Naive thymus-derived CD4-positive, alpha-beta T cell (primary cell): ENCODE measurements at regions of chr7 and their contacts with region 1.

Region 1: GRCh38 chr7:99616359-99617191 is at the start of gene ZSCAN25:
- DNase-seq: peak; percentile 65 to 88 (median 85)
- ATAC-seq: peak; percentile 99
- H3K4me3 ChIP-seq: peak within 1 kb of the TSS; percentile 83
- H3K4me3 Mint-ChIP-seq: peak within 1 kb of the TSS; percentile 94 to 99 (median 98)
- H3K27ac ChIP-seq: peak within 1 kb of the TSS; percentile 90
- H3K27ac Mint-ChIP-seq: peak within 1 kb of the TSS; percentile 88 to 99 (median 97)
- H3K4me1 ChIP-seq: peaks cover 12 to 14% of the 10 kb centered on the region in 2 donors
- H3K4me1 Mint-ChIP-seq: peaks cover 30 to 55% (median 48%) of the 10 kb centered on the region in 7 donors
- H3K27me3 ChIP-seq: no peaks in the 10 kb centered on the region
- H3K27me3 Mint-ChIP-seq: peaks cover 0 to 4% (median 0%) of the 10 kb centered on the region in 5 donors
- total RNA-seq, gene ZSCAN25: 33.9 to 51.6 (median 43.8) TPM

Region 2: DNA sequence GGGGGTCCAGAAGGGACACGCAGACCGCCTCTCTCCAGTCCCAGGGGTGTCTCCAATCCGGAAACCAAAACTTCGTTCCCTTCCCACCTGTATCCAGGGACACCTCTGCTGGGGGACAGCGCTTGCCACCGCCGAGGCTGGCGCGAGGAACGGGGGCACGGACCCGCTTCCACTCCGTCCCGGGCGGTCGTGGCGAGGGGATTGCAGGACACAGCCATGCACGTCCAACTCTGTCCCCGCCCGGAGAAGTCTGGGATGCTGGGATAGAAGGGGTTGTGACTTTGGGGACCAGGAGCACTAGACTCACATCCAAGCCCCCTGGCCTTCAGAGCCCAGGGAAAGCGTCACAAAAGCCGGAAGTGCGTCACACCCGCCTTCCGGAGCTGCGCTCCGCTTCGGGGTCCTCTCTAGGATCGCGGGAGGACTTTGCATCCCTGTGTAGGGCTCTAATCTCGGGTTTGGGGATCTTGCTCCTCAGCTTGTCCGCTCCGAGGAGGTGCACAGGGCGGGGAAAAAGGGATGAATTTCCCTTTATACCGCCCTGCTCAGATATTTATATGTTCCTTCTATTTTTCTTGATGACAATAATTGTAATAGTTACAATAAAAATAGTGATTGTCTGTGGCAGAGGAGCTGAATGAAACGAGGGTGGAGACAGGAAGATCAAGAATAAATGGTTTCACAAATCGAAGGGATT is 64.7 kb before region 1 on chr7 and contains the start of gene FAM200A:
- CTCF ChIA-PET with region 1: no interaction called
- POLR2A ChIA-PET with region 1: interaction called, 38 read pairs
- intact Hi-C with region 1: loop called in 1 of 2 experiments (anchors 1 kb)
- DNase-seq: peak; percentile 62 to 88 (median 83)
- ATAC-seq: peak; percentile 99
- H3K4me3 ChIP-seq: peak within 1 kb of the TSS; percentile 93
- H3K4me3 Mint-ChIP-seq: peak within 1 kb of the TSS; percentile 85 to 95 (median 90)
- H3K27ac ChIP-seq: peak within 1 kb of the TSS; percentile 95
- H3K27ac Mint-ChIP-seq: peak within 1 kb of the TSS; percentile 73 to 98 (median 95)
- H3K4me1 ChIP-seq: peaks cover 17 to 23% of the 10 kb centered on the region in 2 donors
- H3K4me1 Mint-ChIP-seq: peaks cover 23 to 62% (median 48%) of the 10 kb centered on the region in 7 donors
- H3K27me3 ChIP-seq: no peaks in the 10 kb centered on the region
- H3K27me3 Mint-ChIP-seq: no peaks in the 10 kb centered on the region
- total RNA-seq, gene FAM200A: 1.9 to 13.6 (median 5.0) TPM

Region 3: DNA sequence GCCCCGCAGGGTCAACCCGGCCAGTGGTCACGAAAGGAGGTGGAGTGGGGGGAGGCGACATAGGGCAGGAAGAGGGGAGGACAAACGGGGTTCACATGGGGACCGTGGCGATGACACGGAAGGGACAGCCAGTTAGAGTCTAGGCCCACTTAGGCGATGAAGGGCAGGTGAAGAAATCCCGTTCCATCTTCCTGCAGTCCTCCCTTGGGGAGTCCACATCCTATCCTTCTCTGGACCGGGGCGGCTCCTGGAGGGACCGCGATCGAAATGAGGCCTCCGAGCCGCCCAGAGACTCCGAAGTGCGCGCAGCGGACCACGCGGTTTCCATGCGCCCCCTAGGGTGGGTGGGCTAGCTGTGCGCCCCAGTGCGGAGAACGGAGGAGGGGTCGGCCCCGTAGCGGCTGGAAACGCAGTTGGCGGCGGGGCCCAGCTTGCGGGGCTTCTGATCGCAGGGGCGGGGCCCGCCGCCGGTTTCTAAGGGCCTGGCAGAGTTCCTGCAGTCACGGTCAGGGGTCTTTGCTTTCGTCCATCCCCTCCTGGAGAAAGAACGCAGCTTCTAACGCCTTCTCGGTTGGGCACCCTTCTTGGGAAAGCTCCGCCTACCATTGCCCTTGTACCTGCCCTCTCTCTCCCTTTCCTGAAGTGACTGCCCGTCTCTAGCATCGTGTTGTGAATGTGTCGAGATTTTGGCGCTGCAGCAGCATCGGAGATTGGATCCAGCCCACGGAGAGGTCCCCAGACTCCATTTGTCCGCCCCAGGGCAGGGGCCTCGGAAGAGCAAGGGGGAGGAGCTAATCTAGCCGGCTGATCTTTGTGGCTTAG is 36.4 kb before region 1 on chr7:
- CTCF ChIA-PET with region 1: no interaction called
- POLR2A ChIA-PET with region 1: interaction called, 13 read pairs
- intact Hi-C with region 1: loop called in 1 of 2 experiments (anchors 2 kb)
- DNase-seq: peak; percentile 40 to 60 (median 53)
- ATAC-seq: peak; percentile 85
- H3K4me3 ChIP-seq: peak overlapping the region; percentile 77
- H3K4me3 Mint-ChIP-seq: peak overlapping the region; percentile 87 to 98 (median 94)
- H3K27ac ChIP-seq: peak overlapping the region; percentile 73
- H3K27ac Mint-ChIP-seq: peak overlapping the region; percentile 19 to 96 (median 86)
- H3K4me1 ChIP-seq: peaks cover 3 to 4% of the 10 kb centered on the region in 2 donors
- H3K4me1 Mint-ChIP-seq: peaks cover 0 to 24% (median 17%) of the 10 kb centered on the region in 7 donors
- H3K27me3 ChIP-seq: no peaks in the 10 kb centered on the region
- H3K27me3 Mint-ChIP-seq: peaks cover 0 to 3% (median 0%) of the 10 kb centered on the region in 5 donors

Region 4: GRCh38 chr7:99860281-99861127 is 243.9 kb after region 1 on chr7:
- CTCF ChIA-PET with region 1: no interaction called
- POLR2A ChIA-PET with region 1: no interaction called
- intact Hi-C with region 1: no loop called
- DNase-seq: no peak
- ATAC-seq: no peak
- H3K4me3 ChIP-seq: no peak overlapping the region
- H3K4me3 Mint-ChIP-seq: no peak overlapping the region
- H3K27ac ChIP-seq: no peak overlapping the region
- H3K27ac Mint-ChIP-seq: no peak overlapping the region
- H3K4me1 ChIP-seq: no peaks in the 10 kb centered on the region
- H3K4me1 Mint-ChIP-seq: no peaks in the 10 kb centered on the region
- H3K27me3 ChIP-seq: no peaks in the 10 kb centered on the region
- H3K27me3 Mint-ChIP-seq: peaks cover 5 to 10% (median 6%) of the 10 kb centered on the region in 5 donors

Region 5: DNA sequence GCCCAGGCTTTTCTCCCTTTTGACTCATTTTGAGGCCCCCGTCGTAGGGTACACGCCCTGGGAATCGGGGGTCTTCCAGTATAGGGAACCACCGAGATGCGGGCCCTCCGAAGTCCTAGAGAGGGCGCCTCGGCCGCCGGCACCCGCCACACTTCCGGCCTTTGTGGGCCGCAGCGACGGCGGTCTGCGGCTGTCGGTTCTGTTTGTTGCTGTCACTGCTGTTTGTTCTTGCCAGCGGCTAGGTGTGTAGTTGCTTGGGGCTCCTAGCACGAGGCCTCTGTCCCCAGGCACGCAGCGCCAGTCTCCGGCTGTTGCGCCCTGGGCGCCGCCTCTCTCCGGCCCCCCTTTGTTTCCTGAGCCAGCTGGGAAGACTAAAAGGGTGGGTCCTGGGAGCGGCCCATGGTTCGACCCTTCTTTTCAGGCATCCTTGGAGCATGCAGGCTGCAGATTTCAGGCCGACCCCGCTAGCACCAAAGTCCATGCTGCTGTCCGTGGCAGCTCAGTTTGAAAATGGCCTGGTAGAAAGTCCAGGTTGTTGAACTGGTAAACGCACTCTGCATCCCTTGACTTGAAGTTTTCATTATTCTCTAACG is 381.1 kb after region 1 on chr7:
- CTCF ChIA-PET with region 1: no interaction called
- POLR2A ChIA-PET with region 1: no interaction called
- intact Hi-C with region 1: loop called (anchors 5 to 10 kb)
- DNase-seq: peak; percentile 55 to 76 (median 72)
- ATAC-seq: peak; percentile 96
- H3K4me3 ChIP-seq: peak overlapping the region; percentile 43
- H3K4me3 Mint-ChIP-seq: peak overlapping the region; percentile 71 to 85 (median 76)
- H3K27ac ChIP-seq: peak overlapping the region; percentile 71
- H3K27ac Mint-ChIP-seq: peak overlapping the region; percentile 57 to 95 (median 87)
- H3K4me1 ChIP-seq: peaks cover 7 to 11% of the 10 kb centered on the region in 2 donors
- H3K4me1 Mint-ChIP-seq: peaks cover 7 to 21% (median 18%) of the 10 kb centered on the region in 7 donors
- H3K27me3 ChIP-seq: no peaks in the 10 kb centered on the region
- H3K27me3 Mint-ChIP-seq: peaks cover 0 to 3% (median 0%) of the 10 kb centered on the region in 5 donors